GM10248 (cell line): ENCODE measurements at regions of chr1 and their contacts with region 1.

Region 1: DNA sequence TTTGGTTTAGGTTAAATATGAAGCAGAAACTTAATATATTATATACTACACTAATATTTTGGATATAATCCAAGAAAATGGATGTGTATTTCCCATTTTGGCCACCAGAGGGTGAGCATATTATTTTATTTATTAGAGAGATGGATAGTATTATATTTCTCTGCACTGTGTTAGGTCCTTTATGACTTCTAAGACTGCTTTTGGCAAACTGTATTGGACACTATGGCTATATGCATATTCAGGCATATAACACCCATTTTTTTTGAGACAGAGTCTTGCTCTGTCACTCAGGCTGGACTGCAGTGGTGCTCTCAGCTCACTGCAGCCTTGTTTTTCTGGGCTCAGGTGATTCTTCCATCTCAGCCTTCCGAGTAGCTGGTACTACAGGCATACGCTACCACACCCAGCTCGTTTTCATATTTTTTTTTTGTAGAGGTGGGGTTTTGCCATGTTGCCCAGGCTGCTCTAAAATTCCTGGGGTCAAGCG is 17.8 kb upstream of the PGM1 start:
- DNase-seq: peak; percentile 24
- CTCF ChIP-seq: peak; percentile 23

Region 2: DNA sequence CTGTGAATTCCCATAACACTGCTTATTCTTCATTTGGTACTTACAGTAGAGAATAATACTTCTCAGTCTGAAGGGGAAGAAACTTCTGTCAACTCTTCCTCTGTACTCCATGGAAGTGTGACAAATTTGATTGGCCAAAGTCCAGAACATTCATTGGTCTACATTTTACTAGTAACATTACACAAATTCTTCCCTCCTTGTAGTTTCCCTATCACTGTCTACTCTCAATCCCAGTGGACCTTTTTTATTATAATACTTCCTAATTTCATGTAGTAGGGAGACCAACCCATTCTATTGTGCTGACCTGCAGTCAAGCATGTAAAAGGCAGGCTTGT is 133.3 kb before region 1 on chr1:
- CTCF ChIA-PET with region 1: no interaction called
- POLR2A ChIA-PET with region 1: no interaction called
- DNase-seq: no peak
- CTCF ChIP-seq: no peak

Region 3: DNA sequence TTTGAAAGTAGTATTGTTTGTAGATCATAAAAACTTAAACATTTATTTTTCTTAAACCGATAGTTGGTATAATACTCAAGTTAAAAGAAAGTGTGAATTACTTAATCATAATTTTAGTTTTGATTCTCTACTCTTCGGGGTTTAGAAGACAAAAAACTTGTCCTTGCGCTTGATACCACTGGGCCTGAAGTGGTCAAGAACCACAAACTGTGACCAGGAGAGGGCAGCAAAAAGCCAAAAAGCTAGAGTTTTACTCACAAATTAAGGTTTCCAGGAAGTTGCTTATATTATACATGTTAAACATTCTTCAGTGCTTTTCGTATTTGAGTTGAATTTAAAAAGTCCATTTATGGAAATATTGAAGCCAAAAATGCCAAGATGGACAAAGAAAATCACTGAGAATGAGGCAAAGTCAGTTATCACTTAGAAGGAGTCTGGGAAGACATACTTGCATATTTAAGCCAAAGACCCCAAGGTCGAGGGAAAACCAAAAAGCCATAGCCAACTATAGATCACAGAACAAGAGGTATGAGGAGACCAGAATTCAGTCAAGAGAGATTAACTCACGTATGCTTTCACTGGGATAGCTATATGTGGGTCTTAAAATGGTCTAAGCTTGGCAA is 17.9 kb before region 1 on chr1:
- CTCF ChIA-PET with region 1: interaction called, 13 read pairs
- POLR2A ChIA-PET with region 1: no interaction called
- DNase-seq: peak; percentile 20
- CTCF ChIP-seq: peak; percentile 48

Region 4: DNA sequence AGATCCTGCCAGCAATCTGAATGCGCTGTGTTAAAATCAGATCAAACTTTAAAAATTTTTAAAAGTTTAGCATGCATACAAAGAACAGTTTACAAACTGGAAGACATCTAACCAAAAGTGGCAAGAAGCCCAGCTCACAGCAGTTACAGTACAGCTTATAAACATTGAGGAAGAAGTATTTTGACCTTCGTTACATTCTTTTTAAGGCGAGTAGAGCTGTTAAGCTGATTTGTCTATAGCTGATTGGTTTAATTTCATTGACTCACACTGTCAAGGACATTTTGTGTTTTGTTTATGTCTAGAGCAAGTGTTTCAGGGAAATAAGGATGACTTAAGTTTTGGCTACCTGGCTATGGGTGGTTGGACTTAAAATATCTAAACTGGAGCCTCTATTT is 14.8 kb after region 1 on chr1:
- CTCF ChIA-PET with region 1: interaction called, 15 read pairs
- POLR2A ChIA-PET with region 1: no interaction called
- DNase-seq: no peak
- CTCF ChIP-seq: no peak

Region 5: GRCh38 chr1:63980740-63981407 is 405.5 kb after region 1 on chr1:
- CTCF ChIA-PET with region 1: no interaction called
- POLR2A ChIA-PET with region 1: no interaction called
- DNase-seq: no peak
- CTCF ChIP-seq: no peak